CD4-positive, alpha-beta T cell (primary cell): ENCODE measurements at regions of chr7 and their contacts with region 1.

Region 1: GRCh38 chr7:139133335-139134139 is 24.0 kb upstream of the ZC3HAV1 start:
- DNase-seq: peak; percentile 81 to 94 (median 86)
- ATAC-seq: peak; percentile 98
- H3K4me3 ChIP-seq: peak overlapping the region; percentile 68
- H3K4me3 Mint-ChIP-seq: peak overlapping the region; percentile 89
- H3K27ac ChIP-seq: peak overlapping the region; percentile 35 to 65
- H3K27ac Mint-ChIP-seq: peak overlapping the region; percentile 83
- H3K4me1 ChIP-seq: peaks cover 18% of the 10 kb centered on the region
- H3K4me1 Mint-ChIP-seq: peaks cover 14% of the 10 kb centered on the region
- H3K27me3 ChIP-seq: no peaks in the 10 kb centered on the region
- H3K27me3 Mint-ChIP-seq: no peaks in the 10 kb centered on the region
- CTCF ChIP-seq: no peak

Region 2: GRCh38 chr7:139109188-139109982 is 24.2 kb before region 1 on chr7 and contains the start of gene ZC3HAV1:
- CTCF ChIA-PET with region 1: interaction called, 4 read pairs
- POLR2A ChIA-PET with region 1: interaction called, 6 read pairs
- intact Hi-C with region 1: loop called (anchors 1 to 2 kb)
- DNase-seq: peak; percentile 80 to 97 (median 88)
- ATAC-seq: peak; percentile 86
- H3K4me3 ChIP-seq: peak within 1 kb of the TSS; percentile 97
- H3K4me3 Mint-ChIP-seq: peak within 1 kb of the TSS; percentile 99
- H3K27ac ChIP-seq: peak within 1 kb of the TSS; percentile 97 to 98
- H3K27ac Mint-ChIP-seq: peak within 1 kb of the TSS; percentile 95
- H3K4me1 ChIP-seq: peaks cover 35% of the 10 kb centered on the region
- H3K4me1 Mint-ChIP-seq: peaks cover 52% of the 10 kb centered on the region
- H3K27me3 ChIP-seq: no peaks in the 10 kb centered on the region
- H3K27me3 Mint-ChIP-seq: no peaks in the 10 kb centered on the region
- CTCF ChIP-seq: no peak
- total RNA-seq, gene ZC3HAV1: 169 to 178 TPM

Region 3: GRCh38 chr7:139340037-139340807 is 206.7 kb after region 1 on chr7:
- CTCF ChIA-PET with region 1: no interaction called
- POLR2A ChIA-PET with region 1: interaction called, 5 read pairs
- intact Hi-C with region 1: loop called in 1 of 2 experiments (anchors 10 kb)
- DNase-seq: peak; percentile 95 to 100 (median 97)
- ATAC-seq: peak; percentile 82
- H3K4me3 ChIP-seq: peak overlapping the region; percentile 79
- H3K4me3 Mint-ChIP-seq: peak overlapping the region; percentile 94
- H3K27ac ChIP-seq: peak overlapping the region; percentile 98 to 99
- H3K27ac Mint-ChIP-seq: peak overlapping the region; percentile 99
- H3K4me1 ChIP-seq: peaks cover 19% of the 10 kb centered on the region
- H3K4me1 Mint-ChIP-seq: peaks cover 43% of the 10 kb centered on the region
- H3K27me3 ChIP-seq: no peaks in the 10 kb centered on the region
- H3K27me3 Mint-ChIP-seq: peaks cover 8% of the 10 kb centered on the region
- CTCF ChIP-seq: peak; percentile 43